B cell (primary cell): ENCODE measurements at regions of chr1 and their contacts with region 1.

Region 1: DNA sequence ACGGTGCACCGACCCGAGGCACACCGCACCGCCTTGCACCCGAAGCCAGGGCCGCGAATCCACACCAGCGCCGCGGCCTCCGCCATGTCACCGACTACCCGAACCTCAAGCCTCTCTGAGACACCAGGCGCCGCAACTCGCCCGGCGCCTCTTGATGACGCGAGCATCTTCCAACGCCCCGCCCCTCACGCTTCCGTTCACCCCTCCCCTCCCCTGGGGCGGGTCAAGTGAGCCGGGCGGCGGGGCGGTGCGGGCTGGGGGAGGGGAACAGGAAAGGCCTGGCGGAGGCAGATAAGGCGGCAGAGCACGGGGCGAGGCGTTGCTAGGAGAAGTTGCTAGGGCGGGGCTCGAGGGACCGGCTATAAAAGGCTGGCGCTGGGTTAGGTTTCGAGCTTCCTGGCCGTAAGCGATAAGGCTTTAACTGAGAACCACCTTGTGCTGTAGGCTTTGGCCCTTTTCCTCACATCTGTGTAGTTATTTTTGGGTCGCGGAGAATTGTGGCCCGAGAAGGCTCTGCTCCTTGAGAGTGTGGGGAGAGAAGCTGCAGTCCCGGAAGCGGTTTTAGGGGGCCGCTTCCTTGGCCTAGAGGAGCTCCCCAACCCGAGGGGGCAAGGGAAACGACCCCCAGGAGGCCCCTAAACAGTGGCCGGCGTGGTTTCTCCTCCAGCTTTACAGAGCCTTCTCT is at the start of gene SDE2:
- DNase-seq: peak; percentile 100
- ATAC-seq: peak; percentile 81
- H3K4me3 ChIP-seq: peak within 1 kb of the TSS; percentile 75 to 93 (median 88)
- H3K4me3 Mint-ChIP-seq: peak within 1 kb of the TSS; percentile 100
- H3K27ac ChIP-seq: peak within 1 kb of the TSS; percentile 100
- H3K27ac Mint-ChIP-seq: peak within 1 kb of the TSS; percentile 97
- H3K4me1 ChIP-seq: peaks cover 65 to 72% of the 10 kb centered on the region in 2 donors
- H3K4me1 Mint-ChIP-seq: peaks cover 74% of the 10 kb centered on the region
- H3K27me3 ChIP-seq: no peaks in the 10 kb centered on the region
- H3K27me3 Mint-ChIP-seq: no peaks in the 10 kb centered on the region
- CTCF ChIP-seq: no peak
- total RNA-seq, gene SDE2: 26.0 and 26.3 TPM in 2 replicates

Region 2: DNA sequence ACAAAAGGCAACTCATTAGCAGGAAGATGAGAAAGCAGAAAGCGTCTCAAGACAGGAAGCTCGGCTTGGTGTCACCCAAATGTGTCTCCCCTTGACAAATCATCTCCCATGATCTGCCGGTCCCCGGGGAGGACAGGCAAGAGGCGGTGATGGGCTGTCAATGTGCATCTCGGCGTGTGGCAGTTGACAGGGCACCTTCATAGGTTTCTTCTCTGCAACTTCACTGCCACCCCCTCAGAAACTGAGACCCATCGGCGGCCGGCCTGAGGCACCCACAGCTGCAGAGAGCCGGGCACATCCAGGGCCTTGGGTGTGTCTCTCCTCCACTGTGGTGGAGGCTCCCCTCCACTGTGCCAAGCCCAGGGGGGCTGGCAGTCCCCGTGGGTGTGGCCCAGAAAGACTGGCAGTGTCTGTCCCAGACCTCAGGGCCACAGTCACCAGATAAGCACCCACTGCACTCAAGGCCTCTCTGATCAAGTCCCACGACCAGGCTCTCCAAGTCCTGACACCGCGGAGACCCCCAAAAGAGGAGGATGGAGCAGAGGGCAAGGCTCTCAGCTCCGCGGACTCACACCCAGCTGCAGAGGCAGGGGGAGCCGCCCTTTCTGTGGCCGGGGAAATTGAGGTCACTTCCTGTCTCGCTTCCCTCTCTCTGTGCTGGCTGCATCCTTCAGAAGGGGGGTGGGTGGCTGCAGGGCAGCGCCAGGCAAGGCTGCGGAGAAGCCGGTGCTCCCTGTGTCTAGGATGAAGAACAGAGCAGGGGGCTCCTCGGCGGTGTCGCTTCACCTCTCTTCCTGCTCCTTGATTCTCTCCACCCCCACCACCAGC is 532.0 kb before region 1 on chr1:
- CTCF ChIA-PET with region 1: no interaction called
- POLR2A ChIA-PET with region 1: interaction called, 8 read pairs
- intact Hi-C with region 1: loop called (anchors 1 kb)
- DNase-seq: peak; percentile 92
- ATAC-seq: peak; percentile 88
- H3K4me3 ChIP-seq: peak overlapping the region; percentile 68 to 83 (median 73)
- H3K4me3 Mint-ChIP-seq: peak overlapping the region; percentile 91
- H3K27ac ChIP-seq: peak overlapping the region; percentile 82 to 97
- H3K27ac Mint-ChIP-seq: peak overlapping the region; percentile 97
- H3K4me1 ChIP-seq: peaks cover 15 to 34% of the 10 kb centered on the region in 2 donors
- H3K4me1 Mint-ChIP-seq: peaks cover 37% of the 10 kb centered on the region
- H3K27me3 ChIP-seq: no peaks in the 10 kb centered on the region
- H3K27me3 Mint-ChIP-seq: no peaks in the 10 kb centered on the region
- CTCF ChIP-seq: no peak

Region 3: GRCh38 chr1:225817611-225818061 is 181.7 kb before region 1 on chr1:
- CTCF ChIA-PET with region 1: no interaction called
- POLR2A ChIA-PET with region 1: no interaction called
- intact Hi-C with region 1: no loop called
- DNase-seq: no peak
- ATAC-seq: no peak
- H3K4me3 ChIP-seq: no peak overlapping the region
- H3K4me3 Mint-ChIP-seq: no peak overlapping the region
- H3K27ac ChIP-seq: no peak overlapping the region
- H3K27ac Mint-ChIP-seq: no peak overlapping the region
- H3K4me1 ChIP-seq: no peaks in the 10 kb centered on the region
- H3K4me1 Mint-ChIP-seq: no peaks in the 10 kb centered on the region
- H3K27me3 ChIP-seq: no peaks in the 10 kb centered on the region
- H3K27me3 Mint-ChIP-seq: no peaks in the 10 kb centered on the region
- CTCF ChIP-seq: no peak

Region 4: DNA sequence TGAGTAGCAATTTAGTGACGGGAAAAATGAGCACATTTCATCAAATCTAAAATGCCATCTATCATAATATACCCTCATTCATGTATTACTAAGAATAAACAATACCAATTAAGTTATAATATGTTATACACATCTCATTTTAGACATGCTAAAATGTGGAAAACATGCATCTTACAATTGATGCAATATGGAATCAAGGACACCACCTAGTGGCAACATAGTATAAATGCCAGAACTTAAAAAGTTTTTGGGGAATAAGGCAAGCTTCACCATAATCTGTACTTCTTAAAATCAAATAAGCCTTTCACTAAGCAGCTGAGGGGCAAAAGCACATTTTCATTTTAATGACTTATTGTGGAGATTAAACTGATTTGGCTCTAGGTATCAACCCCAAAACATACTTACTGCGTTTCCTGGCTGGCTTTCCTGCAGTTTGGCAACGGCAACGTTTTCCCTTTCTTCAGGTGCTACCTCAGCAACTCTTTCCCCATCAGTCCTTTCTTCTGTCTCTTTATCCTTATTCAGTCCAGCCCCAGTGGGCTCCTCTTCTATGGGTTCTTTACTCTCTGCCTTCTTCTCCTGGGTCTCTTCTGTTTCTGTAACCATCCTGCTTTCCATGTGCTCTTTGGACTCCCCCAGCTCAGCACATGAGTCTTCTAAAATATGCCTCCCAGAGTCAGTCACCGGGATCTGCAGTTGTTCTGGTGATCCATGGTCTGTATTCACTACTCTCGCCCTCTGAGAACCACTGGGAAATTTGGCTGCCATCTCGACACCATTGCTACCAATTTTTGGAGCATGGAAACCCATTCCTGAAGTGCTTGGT is 11.7 kb before region 1 on chr1:
- CTCF ChIA-PET with region 1: interaction called, 25 read pairs
- POLR2A ChIA-PET with region 1: interaction called, 6 read pairs
- intact Hi-C with region 1: loop called (anchors 1 kb)
- DNase-seq: peak; percentile 61
- ATAC-seq: peak; percentile 67
- H3K4me3 ChIP-seq: no peak overlapping the region
- H3K4me3 Mint-ChIP-seq: no peak overlapping the region
- H3K27ac ChIP-seq: no peak overlapping the region
- H3K27ac Mint-ChIP-seq: peak overlapping the region; percentile 37
- H3K4me1 ChIP-seq: peaks cover 0 to 4% of the 10 kb centered on the region in 2 donors
- H3K4me1 Mint-ChIP-seq: peaks cover 25% of the 10 kb centered on the region
- H3K27me3 ChIP-seq: no peaks in the 10 kb centered on the region
- H3K27me3 Mint-ChIP-seq: no peaks in the 10 kb centered on the region
- CTCF ChIP-seq: peak; percentile 87

Region 5: GRCh38 chr1:226029093-226029496 is 29.7 kb after region 1 on chr1:
- CTCF ChIA-PET with region 1: interaction called, 22 read pairs
- POLR2A ChIA-PET with region 1: interaction called, 102 read pairs
- intact Hi-C with region 1: loop called (anchors 1 kb)
- DNase-seq: peak; percentile 90
- ATAC-seq: peak; percentile 92
- H3K4me3 ChIP-seq: peak overlapping the region in 1 of 5 experiments; percentile 9
- H3K4me3 Mint-ChIP-seq: peak overlapping the region; percentile 81
- H3K27ac ChIP-seq: peak overlapping the region; percentile 70 to 87
- H3K27ac Mint-ChIP-seq: peak overlapping the region; percentile 97
- H3K4me1 ChIP-seq: peaks cover 34 to 35% of the 10 kb centered on the region in 2 donors
- H3K4me1 Mint-ChIP-seq: peaks cover 44% of the 10 kb centered on the region
- H3K27me3 ChIP-seq: no peaks in the 10 kb centered on the region
- H3K27me3 Mint-ChIP-seq: no peaks in the 10 kb centered on the region
- CTCF ChIP-seq: no peak

Region 6: DNA sequence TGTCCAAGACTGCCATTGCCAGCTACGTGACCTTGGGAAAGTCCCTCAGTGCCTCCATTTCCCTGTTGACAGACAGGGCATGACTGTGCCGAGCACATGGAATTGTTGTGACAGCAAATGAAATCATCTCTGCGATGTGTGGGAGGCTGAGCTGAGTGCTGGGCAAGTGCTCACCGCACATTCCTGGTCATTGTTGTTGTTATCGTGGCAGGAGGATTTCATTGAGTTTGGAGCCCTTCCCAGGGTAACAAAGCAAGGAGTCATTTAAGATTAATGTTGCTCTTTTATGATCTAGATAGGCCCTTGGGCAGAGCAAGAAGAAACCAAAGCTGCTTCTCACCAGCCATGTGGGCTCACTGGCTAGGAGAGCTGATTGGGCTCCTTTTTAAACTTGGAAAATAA is 779.3 kb after region 1 on chr1:
- CTCF ChIA-PET with region 1: no interaction called
- POLR2A ChIA-PET with region 1: no interaction called
- intact Hi-C with region 1: no loop called
- DNase-seq: no peak
- ATAC-seq: no peak
- H3K4me3 ChIP-seq: no peak overlapping the region
- H3K4me3 Mint-ChIP-seq: no peak overlapping the region
- H3K27ac ChIP-seq: no peak overlapping the region
- H3K27ac Mint-ChIP-seq: no peak overlapping the region
- H3K4me1 ChIP-seq: no peaks in the 10 kb centered on the region
- H3K4me1 Mint-ChIP-seq: no peaks in the 10 kb centered on the region
- H3K27me3 ChIP-seq: no peaks in the 10 kb centered on the region
- H3K27me3 Mint-ChIP-seq: no peaks in the 10 kb centered on the region
- CTCF ChIP-seq: no peak